Activated CD4-positive, alpha-beta T cell treated with anti-CD3 and anti-CD28 coated beads, Interleukin-2, amount 10 ng/mL, durations not matched to agents 24 days and 14 days (primary cell): ENCODE measurements at regions of chr1 and their contacts with region 1.

Region 1: GRCh38 chr1:40040511-40041465 is at the start of gene CAP1:
- DNase-seq: peak; percentile 100
- H3K4me3 Mint-ChIP-seq: peak within 1 kb of the TSS; percentile 93
- H3K27ac Mint-ChIP-seq: peak within 1 kb of the TSS; percentile 95
- H3K4me1 Mint-ChIP-seq: peaks cover 60% of the 10 kb centered on the region
- H3K27me3 Mint-ChIP-seq: no peaks in the 10 kb centered on the region
- total RNA-seq, gene CAP1: 417 and 440 TPM in 2 replicates

Region 2: GRCh38 chr1:39954816-39955546 is 85.8 kb before region 1 on chr1 and contains the start of gene MFSD2A:
- intact Hi-C with region 1: loop called (anchors 5 kb)
- DNase-seq: peak; percentile 95
- H3K4me3 Mint-ChIP-seq: peak within 1 kb of the TSS; percentile 91
- H3K27ac Mint-ChIP-seq: peak within 1 kb of the TSS; percentile 91
- H3K4me1 Mint-ChIP-seq: peaks cover 45% of the 10 kb centered on the region
- H3K27me3 Mint-ChIP-seq: peaks cover 9% of the 10 kb centered on the region
- total RNA-seq, gene MFSD2A: 47.0 and 49.7 TPM in 2 replicates

Region 3: GRCh38 chr1:40059338-40059959 is 18.7 kb after region 1 on chr1:
- intact Hi-C with region 1: loop called (anchors 2 kb)
- DNase-seq: peak; percentile 73
- H3K4me3 Mint-ChIP-seq: peak overlapping the region; percentile 77
- H3K27ac Mint-ChIP-seq: peak overlapping the region; percentile 82
- H3K4me1 Mint-ChIP-seq: peaks cover 77% of the 10 kb centered on the region
- H3K27me3 Mint-ChIP-seq: no peaks in the 10 kb centered on the region

Region 4: GRCh38 chr1:40385437-40386358 is 344.9 kb after region 1 on chr1:
- intact Hi-C with region 1: loop called (anchors 5 kb)
- DNase-seq: peak; percentile 93
- H3K4me3 Mint-ChIP-seq: peak overlapping the region; percentile 88
- H3K27ac Mint-ChIP-seq: peak overlapping the region; percentile 99
- H3K4me1 Mint-ChIP-seq: peaks cover 79% of the 10 kb centered on the region
- H3K27me3 Mint-ChIP-seq: no peaks in the 10 kb centered on the region